A549 (cell line): ENCODE measurements at regions of chr2 and their contacts with region 1.

Region 1: DNA sequence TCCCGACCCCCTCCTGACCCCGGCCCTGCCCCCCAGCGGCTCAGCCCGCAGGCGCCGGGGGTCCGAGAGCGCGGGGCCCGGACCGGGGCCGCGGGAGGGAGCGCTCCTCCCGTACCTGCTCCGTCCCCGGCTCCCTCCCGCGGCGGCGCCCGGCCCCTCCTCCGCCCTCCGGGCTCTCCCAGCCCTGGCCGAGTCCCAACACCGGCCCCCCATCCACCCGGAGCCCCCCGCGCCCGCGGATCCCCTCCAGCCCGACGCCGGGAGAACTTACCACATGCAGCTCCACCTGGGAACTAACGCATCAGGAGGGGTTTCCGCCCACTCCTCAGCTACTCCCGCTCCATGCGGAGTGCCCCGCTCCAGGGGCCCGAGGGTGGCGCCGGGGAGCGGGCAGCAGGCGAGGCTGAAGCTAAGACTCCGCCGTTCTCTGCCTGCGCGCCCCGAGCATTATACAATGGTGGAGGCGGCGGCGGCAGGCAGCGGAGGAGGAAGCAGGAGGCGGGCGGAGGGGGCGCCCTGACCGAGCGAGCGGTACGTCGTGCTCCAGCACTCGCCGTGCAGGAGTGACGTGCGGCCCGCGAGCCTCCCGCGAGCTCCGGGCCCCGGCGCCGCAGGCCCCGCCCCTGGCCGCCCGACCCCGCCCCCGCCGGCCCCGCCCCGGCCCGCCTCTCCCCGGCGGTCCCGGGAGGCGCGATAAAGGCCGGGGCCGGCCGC is at the start of gene SERTAD2:
- DNase-seq: peak; percentile 82 to 91
- ATAC-seq: peak; percentile 83 to 86
- H3K4me3 ChIP-seq: peak within 1 kb of the TSS; percentile 80
- H3K27ac ChIP-seq: peak within 1 kb of the TSS; percentile 93 to 99
- H3K4me1 ChIP-seq: peaks cover 49% of the 10 kb centered on the region
- CTCF ChIP-seq: peak; percentile 18; the same call in 1 of the 3 replicates
- EP300 ChIP-seq: no peak
- POLR2A ChIP-seq: peak; percentile 89
- RAD21 ChIP-seq: peak in 1 of 2 experiments; percentile 31; a peak in 1 of 5 replicates
- polyA plus RNA-seq, gene SERTAD2: 11.8 and 14.0 TPM in 2 replicates

Region 2: DNA sequence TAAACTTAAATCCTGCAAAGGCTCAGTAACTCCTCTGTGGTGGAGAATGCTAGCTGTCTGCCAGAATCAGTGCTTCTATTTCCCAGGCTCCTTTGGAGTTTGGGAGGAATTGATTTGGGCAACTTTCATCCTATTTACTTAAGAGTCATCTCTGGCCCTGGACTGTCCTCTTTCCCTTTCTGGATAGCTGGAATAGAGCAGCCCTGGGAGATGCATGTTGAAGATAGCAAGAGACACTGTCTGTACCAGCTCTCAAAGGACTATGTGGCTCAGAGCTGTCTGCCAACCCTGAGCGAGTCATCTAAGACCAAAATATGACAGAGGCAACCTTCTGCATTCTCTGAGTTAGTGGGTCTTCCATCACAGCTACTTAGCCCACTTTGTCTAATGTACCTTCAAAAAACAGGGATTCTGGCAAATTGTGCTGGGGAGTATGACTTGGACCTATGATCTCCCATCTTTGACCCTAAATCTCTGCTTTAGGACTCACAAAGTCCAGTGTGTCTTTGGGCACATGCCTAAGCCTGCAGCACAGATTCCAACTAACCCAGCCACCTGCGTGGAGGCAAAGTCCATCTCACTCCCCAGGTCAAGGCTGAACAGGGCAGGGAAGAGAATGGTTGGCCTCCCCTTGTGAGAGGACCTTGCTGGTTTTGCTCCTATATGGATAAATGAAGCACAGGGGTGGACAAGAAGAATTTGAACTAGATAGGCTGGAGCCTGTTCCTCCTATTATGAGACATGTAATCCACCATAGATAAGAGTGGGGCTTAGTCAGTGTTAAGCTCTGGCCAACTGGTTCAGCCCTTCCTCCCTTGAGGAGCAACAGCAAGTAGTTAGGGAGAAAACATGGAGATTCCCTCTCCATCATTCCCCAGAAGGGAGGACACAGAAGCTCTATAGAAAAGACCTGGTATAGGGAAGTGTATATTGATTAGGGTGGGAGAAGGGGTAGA is 410.1 kb before region 1 on chr2:
- CTCF ChIA-PET with region 1: no interaction called
- POLR2A ChIA-PET with region 1: no interaction called
- DNase-seq: no peak
- ATAC-seq: no peak
- H3K4me3 ChIP-seq: no peak overlapping the region
- H3K27ac ChIP-seq: no peak overlapping the region
- H3K4me1 ChIP-seq: no peaks in the 10 kb centered on the region
- CTCF ChIP-seq: no peak
- EP300 ChIP-seq: no peak
- POLR2A ChIP-seq: no peak
- RAD21 ChIP-seq: no peak

Region 3: GRCh38 chr2:64493788-64494187 is 159.7 kb before region 1 on chr2:
- CTCF ChIA-PET with region 1: no interaction called
- POLR2A ChIA-PET with region 1: no interaction called
- DNase-seq: no peak
- ATAC-seq: 0 out of 6 replicates have a peak, but pooled peaks of 1 of the 2 experiments have one; percentile 27
- H3K4me3 ChIP-seq: no peak overlapping the region
- H3K27ac ChIP-seq: no peak overlapping the region
- H3K4me1 ChIP-seq: no peaks in the 10 kb centered on the region
- CTCF ChIP-seq: no peak
- EP300 ChIP-seq: no peak
- POLR2A ChIP-seq: no peak
- RAD21 ChIP-seq: no peak

Region 4: DNA sequence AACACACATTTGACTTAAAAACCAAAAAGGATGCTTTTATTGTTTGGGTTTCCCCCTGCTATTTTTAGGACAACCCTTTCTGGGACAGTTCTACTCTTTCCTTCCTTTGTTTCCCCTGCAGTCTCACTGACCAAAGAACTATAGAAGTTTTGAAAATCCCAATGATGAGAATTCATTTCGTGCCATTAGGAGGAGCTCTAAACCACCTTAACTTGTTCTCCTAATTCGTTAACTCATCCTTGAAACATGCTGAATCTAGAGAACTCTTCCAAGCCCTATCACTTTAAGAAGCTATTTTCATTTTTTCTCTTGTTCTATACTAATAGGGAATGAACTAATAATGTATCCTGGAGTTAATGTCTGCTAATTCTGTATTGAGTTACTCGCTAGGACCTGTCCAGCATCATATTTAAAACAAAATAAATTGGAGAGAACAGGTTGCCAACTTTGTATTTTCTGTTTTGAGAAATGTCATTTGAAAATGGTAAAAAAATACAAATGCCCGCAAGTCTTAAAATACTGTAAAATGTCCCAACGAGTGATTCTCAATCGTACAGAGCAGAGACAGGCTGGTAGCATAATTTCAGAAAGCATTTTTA is 66.5 kb before region 1 on chr2:
- CTCF ChIA-PET with region 1: interaction called, 8 read pairs
- POLR2A ChIA-PET with region 1: interaction called, 10 read pairs
- DNase-seq: peak; percentile 60 to 68
- ATAC-seq: peak; percentile 82 to 83
- H3K4me3 ChIP-seq: no peak overlapping the region
- H3K27ac ChIP-seq: no peak overlapping the region
- H3K4me1 ChIP-seq: no peaks in the 10 kb centered on the region
- CTCF ChIP-seq: peak; percentile 91
- EP300 ChIP-seq: no peak
- POLR2A ChIP-seq: no peak
- RAD21 ChIP-seq: peak; percentile 83 to 89

Region 5: GRCh38 chr2:64675860-64676259 is 22.4 kb after region 1 on chr2:
- CTCF ChIA-PET with region 1: interaction called, 13 read pairs
- POLR2A ChIA-PET with region 1: interaction called, 12 read pairs
- DNase-seq: peak; percentile 29 to 32
- ATAC-seq: peak; percentile 56 to 86
- H3K4me3 ChIP-seq: no peak overlapping the region
- H3K27ac ChIP-seq: no peak overlapping the region
- H3K4me1 ChIP-seq: peaks cover 14% of the 10 kb centered on the region
- CTCF ChIP-seq: no peak
- EP300 ChIP-seq: no peak
- POLR2A ChIP-seq: no peak
- RAD21 ChIP-seq: no peak

Region 6: DNA sequence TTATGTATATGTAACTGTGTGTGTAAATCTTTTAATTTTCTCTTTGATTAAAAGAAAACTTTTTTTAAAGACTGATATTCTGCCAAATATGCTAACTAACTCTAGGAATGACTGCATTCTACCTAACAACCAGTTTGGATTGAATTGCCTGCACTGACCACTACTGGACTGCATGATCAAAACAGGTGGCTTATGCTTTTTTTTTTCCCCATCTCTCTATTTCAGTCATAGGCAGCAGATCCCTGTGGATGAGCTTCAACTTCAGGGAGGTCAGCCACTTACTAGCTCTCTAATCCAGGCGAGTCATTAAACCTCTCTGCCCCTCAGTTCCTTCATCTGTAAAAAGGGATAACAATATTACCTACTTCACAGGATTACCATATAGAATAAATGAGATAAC is 138.8 kb after region 1 on chr2:
- CTCF ChIA-PET with region 1: interaction called, 7 read pairs
- POLR2A ChIA-PET with region 1: interaction called, 14 read pairs
- DNase-seq: peak in 1 of 2 experiments; percentile 41
- ATAC-seq: peak; percentile 51 to 70; a peak in 3 of 6 replicates
- H3K4me3 ChIP-seq: no peak overlapping the region
- H3K27ac ChIP-seq: no peak overlapping the region
- H3K4me1 ChIP-seq: peaks cover 10% of the 10 kb centered on the region
- CTCF ChIP-seq: no peak
- EP300 ChIP-seq: no peak
- POLR2A ChIP-seq: no peak
- RAD21 ChIP-seq: peak in 1 of 2 experiments; percentile 21; a peak in 1 of 5 replicates

Region 7: GRCh38 chr2:64814007-64814406 is 160.5 kb after region 1 on chr2:
- CTCF ChIA-PET with region 1: no interaction called
- POLR2A ChIA-PET with region 1: no interaction called
- DNase-seq: no peak
- ATAC-seq: no peak
- H3K4me3 ChIP-seq: no peak overlapping the region
- H3K27ac ChIP-seq: no peak overlapping the region
- H3K4me1 ChIP-seq: no peaks in the 10 kb centered on the region
- CTCF ChIP-seq: no peak
- EP300 ChIP-seq: no peak
- POLR2A ChIP-seq: no peak
- RAD21 ChIP-seq: no peak

Region 8: GRCh38 chr2:64852771-64853705 is 199.5 kb after region 1 on chr2:
- CTCF ChIA-PET with region 1: interaction called, 13 read pairs
- POLR2A ChIA-PET with region 1: interaction called, 16 read pairs
- DNase-seq: no peak
- ATAC-seq: no peak
- H3K4me3 ChIP-seq: no peak overlapping the region
- H3K27ac ChIP-seq: no peak overlapping the region
- H3K4me1 ChIP-seq: peaks cover 6% of the 10 kb centered on the region; the same call in 1 of the 3 replicates
- CTCF ChIP-seq: no peak
- EP300 ChIP-seq: no peak
- POLR2A ChIP-seq: no peak
- RAD21 ChIP-seq: no peak

Region 9: GRCh38 chr2:64873472-64873924 is 220.0 kb after region 1 on chr2:
- CTCF ChIA-PET with region 1: interaction called, 22 read pairs
- POLR2A ChIA-PET with region 1: interaction called, 4 read pairs
- DNase-seq: peak; percentile 65 to 73
- ATAC-seq: peak; percentile 83 to 94
- H3K4me3 ChIP-seq: no peak overlapping the region
- H3K27ac ChIP-seq: no peak overlapping the region
- H3K4me1 ChIP-seq: peaks cover 15% of the 10 kb centered on the region
- CTCF ChIP-seq: peak; percentile 95
- EP300 ChIP-seq: no peak
- POLR2A ChIP-seq: no peak
- RAD21 ChIP-seq: peak; percentile 94 to 97